ENCODE measurements at regions of chr1 and their contacts with region 1.

Region 1: DNA sequence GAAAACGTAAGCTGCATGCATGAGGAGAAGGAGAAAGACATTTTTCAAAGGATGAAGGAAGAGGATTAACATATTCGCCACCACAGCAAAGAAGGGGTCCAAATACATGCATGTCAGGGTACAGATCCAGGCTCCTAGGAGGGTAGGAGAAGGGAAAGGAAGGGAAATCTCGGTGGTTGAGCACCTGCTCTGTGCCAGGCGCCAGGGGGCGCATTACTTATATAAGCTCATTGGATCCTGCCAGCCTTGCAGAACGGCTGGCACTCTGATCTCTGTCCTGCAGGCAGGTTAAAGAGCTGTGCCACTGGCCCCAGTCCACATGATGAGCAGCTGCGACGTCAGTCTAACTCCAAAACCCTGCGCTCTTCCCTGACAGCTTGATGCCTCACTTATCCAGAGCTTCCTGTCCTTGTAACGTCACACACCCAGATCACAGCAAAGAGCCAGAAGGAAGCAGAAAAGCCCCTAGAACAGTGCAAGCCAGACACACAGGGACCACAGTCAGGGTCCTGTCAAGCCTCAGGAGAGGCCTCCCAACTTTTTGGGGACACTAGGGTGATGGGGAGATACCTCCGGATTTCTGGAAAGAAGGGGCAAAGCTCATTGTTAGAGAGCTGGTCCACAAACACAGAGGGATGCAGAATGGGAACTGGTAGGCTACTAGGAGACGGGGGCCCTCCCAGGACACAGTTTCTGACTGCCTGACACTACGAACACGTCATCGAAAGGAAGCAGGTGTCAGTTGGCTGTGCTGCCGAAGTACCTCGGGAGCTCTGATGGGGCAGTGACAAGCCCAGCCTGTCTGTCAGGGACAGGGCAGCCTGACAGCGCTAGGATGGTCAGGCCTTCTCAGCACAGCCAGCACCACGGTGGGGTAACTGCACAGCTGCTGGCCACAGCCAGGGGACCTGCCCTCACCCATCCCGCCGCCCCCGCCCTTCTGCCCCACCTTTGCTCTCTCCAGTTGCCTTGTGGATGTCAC is 99.1 kb downstream of the BEND5 start:
- DNase-seq: peak; percentile 29 to 74
- H3K4me3 ChIP-seq: no peak overlapping the region
- H3K27ac ChIP-seq: no peak overlapping the region
- H3K4me1 ChIP-seq: peaks cover 2 to 6% (median 5%) of the 10 kb centered on the region in 4 experiments; a peak in 5 of 7 replicates
- H3K27me3 ChIP-seq: peaks cover 0 to 2% (median 0%) of the 10 kb centered on the region in 4 experiments; a peak in 1 of 7 replicates
- CTCF ChIP-seq: peak; percentile 79 to 84 (median 81)
- EP300 ChIP-seq: no peak
- POLR2A ChIP-seq: no peak
- RAD21 ChIP-seq: peak; percentile 52 to 66

Region 2: DNA sequence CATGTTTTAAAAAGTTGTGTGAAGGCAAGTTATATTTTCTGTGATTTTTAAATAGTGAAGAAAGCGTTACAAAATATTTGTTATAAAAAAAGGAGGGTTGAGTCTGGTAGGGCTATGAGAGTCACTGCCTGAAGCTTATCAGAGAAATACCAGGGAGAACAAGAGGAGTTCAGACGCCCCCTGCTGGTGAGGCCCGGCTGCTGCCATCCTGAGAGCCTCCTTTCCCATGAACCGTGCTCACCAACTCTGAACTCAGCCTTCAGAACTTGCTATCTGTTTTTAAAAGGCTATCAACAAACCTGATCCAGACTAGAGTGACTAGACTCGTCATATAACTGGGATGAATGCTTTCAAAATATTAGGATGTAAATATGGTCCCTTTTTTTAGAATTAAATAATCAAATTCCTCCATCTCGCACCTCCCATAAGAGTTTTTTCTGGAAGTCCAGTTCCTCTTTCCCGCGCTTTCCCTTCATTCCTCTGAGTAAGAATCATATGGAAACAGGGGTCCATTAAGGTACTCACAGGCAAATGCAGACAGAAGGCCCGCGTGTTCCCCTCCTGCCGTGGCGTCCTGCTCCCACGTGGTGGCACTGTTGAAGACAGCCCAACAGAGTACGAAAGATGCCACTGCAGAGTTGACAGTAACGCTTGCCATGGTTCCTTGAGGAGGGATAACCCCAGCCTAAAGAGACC is 179.4 kb before region 1 on chr1:
- CTCF ChIA-PET with region 1: interaction called, 11 read pairs
- POLR2A ChIA-PET with region 1: no interaction called
- DNase-seq: peak; percentile 58 to 92
- H3K4me3 ChIP-seq: no peak overlapping the region
- H3K27ac ChIP-seq: no peak overlapping the region
- H3K4me1 ChIP-seq: peaks cover 0 to 21% (median 11%) of the 10 kb centered on the region in 4 experiments; a peak in 5 of 7 replicates
- H3K27me3 ChIP-seq: no peaks in the 10 kb centered on the region
- CTCF ChIP-seq: peak; percentile 76 to 95 (median 90)
- EP300 ChIP-seq: no peak
- POLR2A ChIP-seq: no peak
- RAD21 ChIP-seq: peak; percentile 72 to 75

Region 3: DNA sequence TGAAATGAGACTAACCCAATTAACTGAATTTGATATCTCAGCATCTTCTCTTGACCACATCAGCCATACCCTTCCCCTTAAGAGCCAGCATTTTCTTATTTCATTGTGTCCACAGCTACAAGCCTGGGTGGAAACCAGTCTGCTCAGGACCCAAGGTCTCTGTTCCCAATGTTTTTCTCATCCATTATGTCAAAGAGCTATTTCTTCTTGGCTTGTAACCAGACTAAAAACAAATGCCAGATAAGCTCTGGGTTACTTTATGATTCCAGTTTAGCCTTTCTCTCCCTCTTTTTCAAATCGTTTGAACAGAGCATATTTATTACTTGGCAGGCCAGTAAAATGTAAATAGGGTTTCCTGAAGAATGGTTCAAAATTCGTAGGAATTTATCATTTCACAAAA is 96.3 kb before region 1 on chr1:
- CTCF ChIA-PET with region 1: interaction called, 19 read pairs
- POLR2A ChIA-PET with region 1: no interaction called
- DNase-seq: no peak
- H3K4me3 ChIP-seq: no peak overlapping the region
- H3K27ac ChIP-seq: no peak overlapping the region
- H3K4me1 ChIP-seq: no peaks in the 10 kb centered on the region
- H3K27me3 ChIP-seq: no peaks in the 10 kb centered on the region
- CTCF ChIP-seq: no peak
- EP300 ChIP-seq: no peak
- POLR2A ChIP-seq: no peak
- RAD21 ChIP-seq: no peak

Region 4: GRCh38 chr1:48644905-48645605 is 32.5 kb before region 1 on chr1:
- CTCF ChIA-PET with region 1: interaction called, 225 read pairs
- POLR2A ChIA-PET with region 1: interaction called, 4 read pairs
- DNase-seq: no peak
- H3K4me3 ChIP-seq: no peak overlapping the region
- H3K27ac ChIP-seq: no peak overlapping the region
- H3K4me1 ChIP-seq: peaks cover 0 to 4% (median 2%) of the 10 kb centered on the region in 4 experiments; a peak in 2 of 7 replicates
- H3K27me3 ChIP-seq: no peaks in the 10 kb centered on the region
- CTCF ChIP-seq: no peak
- EP300 ChIP-seq: no peak
- POLR2A ChIP-seq: no peak
- RAD21 ChIP-seq: no peak

Region 5: GRCh38 chr1:48688102-48688760 is 10.6 kb after region 1 on chr1:
- CTCF ChIA-PET with region 1: interaction called, 203 read pairs
- POLR2A ChIA-PET with region 1: interaction called, 3 read pairs
- DNase-seq: no peak
- H3K4me3 ChIP-seq: no peak overlapping the region
- H3K27ac ChIP-seq: no peak overlapping the region
- H3K4me1 ChIP-seq: peaks cover 0 to 5% (median 0%) of the 10 kb centered on the region in 4 experiments; a peak in 1 of 7 replicates
- H3K27me3 ChIP-seq: no peaks in the 10 kb centered on the region
- CTCF ChIP-seq: peak in 2 of 3 experiments; percentile 38 to 74; a peak in 2 of 4 replicates
- EP300 ChIP-seq: no peak
- POLR2A ChIP-seq: no peak
- RAD21 ChIP-seq: peak; percentile 40 to 46; a peak in 3 of 4 replicates

Region 6: GRCh38 chr1:48710318-48710717 is 32.7 kb after region 1 on chr1:
- CTCF ChIA-PET with region 1: interaction called, 28 read pairs
- POLR2A ChIA-PET with region 1: no interaction called
- DNase-seq: peak; percentile 10 to 56
- H3K4me3 ChIP-seq: peak overlapping the region in 1 of 4 experiments; percentile 14; a peak in 2 of 8 replicates
- H3K27ac ChIP-seq: peak overlapping the region; percentile 68
- H3K4me1 ChIP-seq: peaks cover 3 to 13% (median 7%) of the 10 kb centered on the region in 4 experiments; a peak in 6 of 7 replicates
- H3K27me3 ChIP-seq: no peaks in the 10 kb centered on the region
- CTCF ChIP-seq: no peak
- EP300 ChIP-seq: no peak; a peak in 1 of 3 replicates
- POLR2A ChIP-seq: 0 out of 3 replicates have a peak, but pooled peaks of 1 of the 2 experiments have one; percentile 40
- RAD21 ChIP-seq: no peak

Region 7: GRCh38 chr1:48817505-48818114 is 140.0 kb after region 1 on chr1:
- CTCF ChIA-PET with region 1: interaction called, 10 read pairs
- POLR2A ChIA-PET with region 1: no interaction called
- DNase-seq: peak; percentile 31 to 76
- H3K4me3 ChIP-seq: no peak overlapping the region
- H3K27ac ChIP-seq: no peak overlapping the region
- H3K4me1 ChIP-seq: no peaks in the 10 kb centered on the region
- H3K27me3 ChIP-seq: no peaks in the 10 kb centered on the region
- CTCF ChIP-seq: peak; percentile 88 to 93 (median 91)
- EP300 ChIP-seq: no peak
- POLR2A ChIP-seq: no peak
- RAD21 ChIP-seq: peak; percentile 88 to 92

Region 8: GRCh38 chr1:49251019-49251784 is 573.6 kb after region 1 on chr1:
- CTCF ChIA-PET with region 1: no interaction called
- POLR2A ChIA-PET with region 1: no interaction called
- DNase-seq: no peak
- H3K4me3 ChIP-seq: no peak overlapping the region
- H3K27ac ChIP-seq: no peak overlapping the region
- H3K4me1 ChIP-seq: no peaks in the 10 kb centered on the region
- H3K27me3 ChIP-seq: no peaks in the 10 kb centered on the region
- CTCF ChIP-seq: no peak
- EP300 ChIP-seq: no peak
- POLR2A ChIP-seq: no peak
- RAD21 ChIP-seq: no peak

Measured in H1 (cell line).